BJ (cell line): ENCODE measurements at regions of chr2 and their contacts with region 1.

Region 1: DNA sequence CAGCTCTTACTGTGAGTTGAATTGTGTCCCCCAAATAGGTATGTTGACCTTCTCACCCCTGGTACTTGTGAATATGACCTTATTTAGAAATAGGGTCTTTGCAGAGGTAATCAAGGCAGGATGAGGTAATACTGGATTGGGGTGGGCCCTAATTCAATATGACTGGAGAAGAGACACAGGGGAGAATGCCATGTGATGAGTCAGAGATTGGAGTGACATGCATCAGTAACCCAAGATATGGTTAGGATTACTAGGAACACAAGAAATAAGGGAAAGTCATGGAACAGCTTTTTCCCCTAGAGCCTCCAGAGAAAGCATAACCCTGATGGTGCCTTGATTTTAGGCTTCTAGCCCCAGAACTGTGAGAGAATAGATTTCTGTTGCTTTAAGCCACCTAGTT is 37.0 kb upstream of the ATP5MC3 start:
- DNase-seq: no peak
- H3K4me3 ChIP-seq: no peak overlapping the region
- H3K27me3 ChIP-seq: no peaks in the 10 kb centered on the region; the same call in 1 of the 2 replicates
- CTCF ChIP-seq: no peak

Region 2: GRCh38 chr2:174878537-174879147 is 339.9 kb before region 1 on chr2:
- CTCF ChIA-PET with region 1: no interaction called
- POLR2A ChIA-PET with region 1: no interaction called
- DNase-seq: no peak
- H3K4me3 ChIP-seq: peak overlapping the region; percentile 17; the same call in 1 of the 2 replicates
- H3K27me3 ChIP-seq: no peaks in the 10 kb centered on the region
- CTCF ChIP-seq: no peak

Region 3: GRCh38 chr2:175251425-175252041 is 33.0 kb after region 1 on chr2:
- CTCF ChIA-PET with region 1: interaction called, 12 read pairs
- POLR2A ChIA-PET with region 1: no interaction called
- DNase-seq: no peak
- H3K4me3 ChIP-seq: no peak overlapping the region
- H3K27me3 ChIP-seq: peaks cover 7% of the 10 kb centered on the region
- CTCF ChIP-seq: peak; percentile 68